Prostate gland (tissue), 2 donors: ENCODE measurements at regions of chr15 and their contacts with region 1.

Region 1: DNA sequence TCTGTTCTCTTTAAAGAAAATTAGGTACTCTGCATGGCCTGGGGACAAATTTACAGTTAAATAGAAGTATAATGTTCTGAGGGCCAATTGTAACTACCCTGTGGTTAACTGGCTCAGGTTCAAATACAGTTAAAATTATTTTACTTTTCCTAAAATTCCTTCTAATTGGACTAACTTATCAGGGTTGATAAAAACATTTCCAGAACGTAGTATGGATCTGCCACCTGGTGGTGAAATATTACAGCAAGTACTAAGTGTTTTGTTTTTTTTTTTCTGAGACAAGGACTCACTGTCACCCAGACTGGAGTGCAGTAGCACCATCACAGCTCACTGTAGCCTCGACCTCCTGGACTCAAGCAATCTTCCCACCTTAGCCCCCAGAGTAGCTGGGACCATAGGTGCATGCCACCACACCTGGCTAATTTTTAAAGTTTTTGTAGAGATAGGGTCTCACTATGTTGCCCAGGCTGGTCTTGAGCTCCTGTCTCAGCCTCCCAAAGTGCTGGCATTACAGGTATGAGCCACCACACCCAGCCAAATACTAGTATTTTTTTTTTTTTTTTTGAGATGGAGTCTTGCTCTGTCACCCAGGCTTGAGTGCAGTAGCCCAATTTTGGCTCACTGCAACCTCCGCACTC is 29.2 kb downstream of the NEO1 start:
- DNase-seq: peak; percentile 54
- H3K4me3 ChIP-seq: no peak overlapping the region
- H3K27ac ChIP-seq: no peak overlapping the region
- H3K4me1 ChIP-seq: peaks cover 11% of the 10 kb centered on the region
- H3K27me3 ChIP-seq: no peaks in the 10 kb centered on the region
- CTCF ChIP-seq: peak; percentile 33 to 80 (median 64)
- POLR2A ChIP-seq: no peak

Region 2: DNA sequence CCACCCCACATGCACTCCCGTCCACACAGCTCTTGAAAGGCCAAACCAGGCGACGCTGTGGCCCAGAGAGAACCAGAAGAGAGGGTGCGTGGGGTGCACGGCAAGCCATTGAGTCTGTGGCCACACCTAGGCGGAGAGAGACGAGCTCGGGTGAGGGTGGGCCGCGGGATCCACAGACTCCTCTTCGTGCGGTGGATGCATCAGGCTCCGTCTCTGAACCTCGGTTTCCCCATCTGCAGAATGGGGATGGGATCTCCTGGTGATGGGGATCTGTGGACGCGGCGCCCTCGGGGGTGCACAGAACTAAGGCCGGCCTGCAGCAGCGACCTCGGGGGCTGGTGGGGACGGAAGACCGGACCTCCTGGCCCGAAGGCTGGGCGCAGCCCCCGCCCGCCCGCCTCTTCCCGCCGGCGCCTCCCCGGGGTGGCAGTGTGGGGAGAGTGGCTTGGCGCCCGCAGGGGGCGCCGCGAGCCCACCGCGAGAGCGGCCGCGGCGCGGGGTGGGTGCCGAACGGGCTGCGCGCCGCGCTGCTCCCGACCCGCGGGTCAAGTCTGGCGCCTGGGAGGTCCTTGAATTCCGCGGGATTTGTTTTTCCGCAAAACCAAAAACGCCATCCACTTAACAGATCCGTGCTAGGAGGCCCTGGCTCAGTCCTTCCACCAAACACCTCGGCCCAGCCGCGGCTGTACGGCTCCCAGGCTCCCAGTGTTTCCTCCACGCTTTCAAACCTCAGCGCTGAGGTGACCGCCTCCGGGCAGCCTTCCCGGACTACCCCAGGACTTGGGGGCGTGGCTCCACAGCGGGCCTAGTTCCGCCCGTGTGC is 284.7 kb before region 1 on chr15:
- intact Hi-C with region 1: loop called (anchors 1 kb)
- DNase-seq: no peak
- H3K4me3 ChIP-seq: peak overlapping the region; percentile 36 to 45
- H3K27ac ChIP-seq: peak overlapping the region in 1 of 2 donors; percentile 5
- H3K4me1 ChIP-seq: no peaks in the 10 kb centered on the region
- H3K27me3 ChIP-seq: no peaks in the 10 kb centered on the region
- CTCF ChIP-seq: peak; percentile 52 to 75 (median 71)
- POLR2A ChIP-seq: no peak

Region 3: GRCh38 chr15:73127301-73127936 is 46.0 kb after region 1 on chr15:
- intact Hi-C with region 1: no loop called
- DNase-seq: no peak
- H3K4me3 ChIP-seq: no peak overlapping the region
- H3K27ac ChIP-seq: no peak overlapping the region
- H3K4me1 ChIP-seq: no peaks in the 10 kb centered on the region
- H3K27me3 ChIP-seq: no peaks in the 10 kb centered on the region
- CTCF ChIP-seq: peak in 1 of 4 experiments; percentile 42
- POLR2A ChIP-seq: no peak